ENCODE measurements at regions of chrX and their contacts with region 1.

Region 1: DNA sequence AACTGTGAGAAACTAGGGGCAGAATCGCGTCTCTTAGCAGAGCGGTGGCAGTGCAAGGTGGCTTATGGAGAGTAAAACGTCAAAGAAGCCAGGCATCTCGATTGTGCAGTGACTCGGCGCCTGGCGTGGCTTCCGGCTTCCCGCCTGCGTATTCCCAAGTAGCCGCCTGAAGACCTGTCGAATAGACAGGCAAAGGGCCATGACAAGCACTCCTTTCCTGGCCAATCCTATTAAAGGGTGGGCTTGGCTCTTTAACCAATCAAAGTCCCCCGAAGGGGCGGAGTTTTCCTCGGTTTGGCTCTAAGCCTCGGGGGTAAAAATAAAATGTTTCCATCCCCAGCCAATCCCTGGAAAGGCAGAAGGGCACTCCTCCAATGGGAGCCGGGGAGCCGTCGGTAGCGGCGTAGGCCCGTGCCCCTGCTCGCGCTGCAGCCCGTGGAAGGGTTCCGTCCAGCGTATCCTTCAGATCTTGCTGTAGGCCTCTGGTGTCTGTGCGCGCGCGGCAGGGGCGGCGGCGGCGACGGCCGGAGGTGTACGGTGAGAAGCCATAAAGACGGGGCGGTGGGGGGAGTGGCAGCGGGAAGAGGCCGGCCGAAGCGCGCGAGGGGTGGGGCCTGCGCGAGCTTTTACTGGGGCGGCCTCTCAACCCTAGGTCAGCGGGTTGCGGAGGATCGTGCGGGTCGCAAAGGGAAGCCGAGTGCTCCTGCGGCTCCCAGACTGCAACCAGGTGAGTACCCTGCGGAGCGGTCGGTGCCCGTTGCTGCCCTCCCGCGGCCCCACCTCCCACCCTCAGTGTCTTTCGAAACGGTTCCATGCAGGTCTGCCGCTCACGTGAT is at the start of gene KANTR:
- DNase-seq: peak; percentile 58 to 92 (median 80)
- ATAC-seq: peak; percentile 76
- H3K4me3 ChIP-seq: peak within 1 kb of the TSS; percentile 67 to 77
- H3K4me3 Mint-ChIP-seq: peak within 1 kb of the TSS; percentile 88
- H3K27ac ChIP-seq: peak within 1 kb of the TSS; percentile 68 to 77
- H3K27ac Mint-ChIP-seq: peak within 1 kb of the TSS; percentile 91
- H3K4me1 ChIP-seq: peaks cover 3% of the 10 kb centered on the region
- H3K4me1 Mint-ChIP-seq: peaks cover 27% of the 10 kb centered on the region
- H3K27me3 ChIP-seq: no peaks in the 10 kb centered on the region
- H3K27me3 Mint-ChIP-seq: no peaks in the 10 kb centered on the region
- CTCF ChIP-seq: no peak
- total RNA-seq, gene KANTR: 7.7 to 8.6 TPM

Region 2: DNA sequence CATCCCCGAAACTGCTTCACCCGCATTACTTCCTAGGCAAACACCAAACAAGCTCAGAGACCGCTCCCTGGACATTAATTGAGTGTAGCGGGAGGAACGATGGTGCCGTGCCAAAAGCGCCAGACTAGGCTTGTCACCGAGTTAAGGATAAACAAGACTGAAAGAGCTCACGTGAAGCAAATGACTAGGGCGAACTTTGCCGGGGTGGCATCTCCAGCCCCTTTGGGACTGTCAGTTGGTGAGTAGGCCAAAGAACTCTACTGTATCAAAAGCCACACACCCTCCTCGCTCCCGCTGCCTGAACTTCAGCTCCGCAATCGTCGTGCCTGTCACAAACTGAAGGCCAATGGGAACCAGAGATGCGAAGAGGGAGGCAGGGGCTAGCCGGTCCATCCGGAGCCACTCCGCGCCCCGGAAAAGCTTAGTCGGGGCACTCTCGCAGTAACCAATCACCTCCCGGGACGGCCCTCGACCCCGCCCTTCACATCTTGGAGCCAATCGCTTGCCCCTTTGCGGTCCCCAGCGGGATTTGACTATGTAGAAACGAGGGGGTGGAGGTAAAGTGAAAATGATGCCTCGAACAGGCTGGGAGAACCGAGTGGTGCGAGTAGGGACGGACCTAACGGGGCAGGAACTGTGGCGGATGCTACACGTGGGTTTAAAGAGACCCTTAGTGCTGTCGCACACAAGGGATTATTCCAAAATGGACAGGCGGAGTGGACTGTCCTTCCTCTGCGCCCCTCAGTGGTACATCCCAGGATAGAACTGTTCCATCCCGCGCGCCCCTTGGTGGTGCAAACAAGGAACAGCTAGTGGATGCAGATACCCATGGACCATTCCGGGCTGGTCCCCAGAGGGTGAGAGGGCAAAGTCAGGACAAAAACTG is 98.6 kb before region 1 on chrX:
- CTCF ChIA-PET with region 1: no interaction called
- POLR2A ChIA-PET with region 1: no interaction called
- intact Hi-C with region 1: loop called in 1 of 2 experiments (anchors 1 kb)
- DNase-seq: peak; percentile 80 to 95 (median 88)
- ATAC-seq: peak; percentile 95
- H3K4me3 ChIP-seq: peak overlapping the region; percentile 72 to 83
- H3K4me3 Mint-ChIP-seq: peak overlapping the region; percentile 98
- H3K27ac ChIP-seq: peak overlapping the region; percentile 97 to 98
- H3K27ac Mint-ChIP-seq: peak overlapping the region; percentile 100
- H3K4me1 ChIP-seq: peaks cover 17% of the 10 kb centered on the region
- H3K4me1 Mint-ChIP-seq: peaks cover 26% of the 10 kb centered on the region
- H3K27me3 ChIP-seq: no peaks in the 10 kb centered on the region
- H3K27me3 Mint-ChIP-seq: no peaks in the 10 kb centered on the region
- CTCF ChIP-seq: peak; percentile 56

Region 3: GRCh38 chrX:53071604-53072417 is 22.2 kb before region 1 on chrX:
- CTCF ChIA-PET with region 1: interaction called, 20 read pairs
- POLR2A ChIA-PET with region 1: interaction called, 10 read pairs
- intact Hi-C with region 1: loop called (anchors 1 kb)
- DNase-seq: peak in 8 of 9 experiments; percentile 50 to 88 (median 74)
- ATAC-seq: peak; percentile 88
- H3K4me3 ChIP-seq: peak overlapping the region; percentile 48 to 56
- H3K4me3 Mint-ChIP-seq: peak overlapping the region; percentile 89
- H3K27ac ChIP-seq: peak overlapping the region; percentile 39 to 52
- H3K27ac Mint-ChIP-seq: peak overlapping the region; percentile 92
- H3K4me1 ChIP-seq: peaks cover 6% of the 10 kb centered on the region
- H3K4me1 Mint-ChIP-seq: peaks cover 14% of the 10 kb centered on the region
- H3K27me3 ChIP-seq: no peaks in the 10 kb centered on the region
- H3K27me3 Mint-ChIP-seq: no peaks in the 10 kb centered on the region
- CTCF ChIP-seq: peak; percentile 68

Region 4: GRCh38 chrX:53081925-53082772 is 11.8 kb before region 1 on chrX and contains the start of gene TSPYL2:
- CTCF ChIA-PET with region 1: interaction called, 3 read pairs
- POLR2A ChIA-PET with region 1: interaction called, 8 read pairs
- intact Hi-C with region 1: loop called in 1 of 2 experiments (anchors 1 kb)
- DNase-seq: peak; percentile 85 to 96 (median 93)
- ATAC-seq: peak; percentile 77
- H3K4me3 ChIP-seq: peak within 1 kb of the TSS; percentile 68 to 75
- H3K4me3 Mint-ChIP-seq: peak within 1 kb of the TSS; percentile 88
- H3K27ac ChIP-seq: peak within 1 kb of the TSS; percentile 77 to 87
- H3K27ac Mint-ChIP-seq: peak within 1 kb of the TSS; percentile 95
- H3K4me1 ChIP-seq: peaks cover 27% of the 10 kb centered on the region
- H3K4me1 Mint-ChIP-seq: peaks cover 49% of the 10 kb centered on the region
- H3K27me3 ChIP-seq: no peaks in the 10 kb centered on the region
- H3K27me3 Mint-ChIP-seq: no peaks in the 10 kb centered on the region
- CTCF ChIP-seq: no peak
- total RNA-seq, gene TSPYL2: 978 to 1,030 TPM

Region 5: DNA sequence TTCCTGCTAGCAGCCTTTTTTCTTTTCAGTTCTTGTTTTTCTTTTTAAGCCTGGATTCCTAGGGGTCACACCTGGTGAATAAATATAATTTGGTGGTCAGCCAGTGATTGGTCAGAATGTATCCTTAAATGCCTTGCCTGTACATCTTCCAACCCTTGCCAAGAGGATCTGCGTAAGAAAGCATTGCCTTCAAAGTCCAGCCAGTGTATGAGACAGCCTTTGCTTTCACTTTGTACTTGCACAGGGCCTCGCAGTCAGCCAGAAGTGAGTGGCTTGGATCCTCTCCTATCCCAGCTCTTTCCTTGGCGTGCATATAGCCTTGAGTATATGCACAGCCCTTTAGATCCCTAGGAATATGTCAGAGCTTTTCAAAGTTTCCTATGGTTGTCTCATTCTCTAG is 22.1 kb after region 1 on chrX:
- CTCF ChIA-PET with region 1: no interaction called
- POLR2A ChIA-PET with region 1: no interaction called
- intact Hi-C with region 1: no loop called
- DNase-seq: no peak
- ATAC-seq: no peak
- H3K4me3 ChIP-seq: no peak overlapping the region
- H3K4me3 Mint-ChIP-seq: no peak overlapping the region
- H3K27ac ChIP-seq: no peak overlapping the region
- H3K27ac Mint-ChIP-seq: no peak overlapping the region
- H3K4me1 ChIP-seq: no peaks in the 10 kb centered on the region
- H3K4me1 Mint-ChIP-seq: peaks cover 13% of the 10 kb centered on the region
- H3K27me3 ChIP-seq: no peaks in the 10 kb centered on the region
- H3K27me3 Mint-ChIP-seq: no peaks in the 10 kb centered on the region
- CTCF ChIP-seq: no peak

Region 6: GRCh38 chrX:53224860-53225797 is 131.2 kb after region 1 on chrX and contains the start of gene KDM5C:
- CTCF ChIA-PET with region 1: no interaction called
- POLR2A ChIA-PET with region 1: no interaction called
- intact Hi-C with region 1: loop called in 1 of 2 experiments (anchors 2 kb)
- DNase-seq: peak; percentile 60 to 96 (median 89)
- ATAC-seq: peak; percentile 70
- H3K4me3 ChIP-seq: peak within 1 kb of the TSS; percentile 81 to 97
- H3K4me3 Mint-ChIP-seq: peak within 1 kb of the TSS; percentile 97
- H3K27ac ChIP-seq: peak within 1 kb of the TSS; percentile 92 to 98
- H3K27ac Mint-ChIP-seq: peak within 1 kb of the TSS; percentile 99
- H3K4me1 ChIP-seq: peaks cover 36% of the 10 kb centered on the region
- H3K4me1 Mint-ChIP-seq: peaks cover 39% of the 10 kb centered on the region
- H3K27me3 ChIP-seq: no peaks in the 10 kb centered on the region
- H3K27me3 Mint-ChIP-seq: no peaks in the 10 kb centered on the region
- CTCF ChIP-seq: no peak
- total RNA-seq, gene KDM5C: 276 to 295 TPM

Region 7: GRCh38 chrX:53422086-53422860 is 328.3 kb after region 1 on chrX and contains the start of gene SMC1A:
- CTCF ChIA-PET with region 1: no interaction called
- POLR2A ChIA-PET with region 1: no interaction called
- intact Hi-C with region 1: loop called in 1 of 2 experiments (anchors 5 kb)
- DNase-seq: peak; percentile 86 to 98 (median 96)
- ATAC-seq: peak; percentile 89
- H3K4me3 ChIP-seq: peak within 1 kb of the TSS; percentile 92 to 94
- H3K4me3 Mint-ChIP-seq: peak within 1 kb of the TSS; percentile 94
- H3K27ac ChIP-seq: peak within 1 kb of the TSS; percentile 95 to 99
- H3K27ac Mint-ChIP-seq: peak within 1 kb of the TSS; percentile 95
- H3K4me1 ChIP-seq: peaks cover 18% of the 10 kb centered on the region
- H3K4me1 Mint-ChIP-seq: peaks cover 33% of the 10 kb centered on the region
- H3K27me3 ChIP-seq: no peaks in the 10 kb centered on the region
- H3K27me3 Mint-ChIP-seq: no peaks in the 10 kb centered on the region
- CTCF ChIP-seq: no peak
- total RNA-seq, gene SMC1A: 23.7 to 25.3 TPM

Region 8: GRCh38 chrX:53683556-53684414 is 589.8 kb after region 1 on chrX:
- CTCF ChIA-PET with region 1: no interaction called
- POLR2A ChIA-PET with region 1: interaction called, 3 read pairs
- intact Hi-C with region 1: loop called in 1 of 2 experiments (anchors 10 kb)
- DNase-seq: peak; percentile 75 to 98 (median 86)
- ATAC-seq: peak; percentile 78
- H3K4me3 ChIP-seq: peak overlapping the region; percentile 76 to 86
- H3K4me3 Mint-ChIP-seq: peak overlapping the region; percentile 88
- H3K27ac ChIP-seq: peak overlapping the region; percentile 94 to 97
- H3K27ac Mint-ChIP-seq: peak overlapping the region; percentile 97
- H3K4me1 ChIP-seq: peaks cover 31% of the 10 kb centered on the region
- H3K4me1 Mint-ChIP-seq: peaks cover 49% of the 10 kb centered on the region
- H3K27me3 ChIP-seq: no peaks in the 10 kb centered on the region
- H3K27me3 Mint-ChIP-seq: no peaks in the 10 kb centered on the region
- CTCF ChIP-seq: no peak

Measured in CD8-positive, alpha-beta T cell (primary cell).